Prostate gland (tissue), 2 donors: ENCODE measurements at regions of chr14 and their contacts with region 1.

Region 1: DNA sequence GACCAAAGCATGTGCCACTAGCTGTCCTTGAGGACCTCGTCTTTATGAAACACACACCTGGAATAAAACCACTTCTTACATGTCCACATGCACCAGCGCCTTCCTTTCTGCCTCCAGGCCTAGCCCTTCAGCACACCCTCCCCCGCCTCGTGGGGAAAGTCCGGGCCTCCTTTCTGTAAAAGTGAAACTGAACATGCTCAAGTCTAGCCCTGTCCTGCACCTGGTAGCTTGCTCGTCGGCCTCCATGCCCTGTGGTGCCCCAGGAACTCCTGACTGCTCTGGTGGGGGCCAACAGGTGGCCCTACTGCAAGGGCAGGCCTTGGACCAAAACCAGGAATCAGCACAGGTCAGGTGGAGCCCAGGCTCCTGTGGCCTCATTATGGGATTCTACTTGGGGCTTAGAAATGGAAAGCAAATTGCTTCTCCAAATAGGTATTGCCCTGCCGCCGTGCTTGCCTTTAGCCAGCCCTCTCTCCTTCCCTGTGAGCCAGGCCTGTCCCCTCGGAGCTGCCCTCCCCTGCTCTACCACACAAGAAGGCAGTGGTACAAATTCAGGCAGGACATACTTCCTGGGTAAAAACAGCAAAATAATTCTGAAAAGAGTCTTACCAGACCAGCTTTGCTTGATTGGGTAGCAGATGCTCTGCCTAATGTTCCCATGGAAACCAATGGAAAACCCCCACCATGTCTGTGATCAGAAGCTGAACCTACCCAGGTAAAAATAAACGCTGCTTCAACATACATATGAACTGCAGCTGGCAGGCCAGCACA is 43.5 kb downstream of the ERH start:
- DNase-seq: peak; percentile 16
- H3K4me3 ChIP-seq: no peak overlapping the region
- H3K27ac ChIP-seq: peak overlapping the region; percentile 61 to 64
- H3K4me1 ChIP-seq: peaks cover 5% of the 10 kb centered on the region
- H3K27me3 ChIP-seq: no peaks in the 10 kb centered on the region
- CTCF ChIP-seq: no peak
- POLR2A ChIP-seq: no peak

Region 2: DNA sequence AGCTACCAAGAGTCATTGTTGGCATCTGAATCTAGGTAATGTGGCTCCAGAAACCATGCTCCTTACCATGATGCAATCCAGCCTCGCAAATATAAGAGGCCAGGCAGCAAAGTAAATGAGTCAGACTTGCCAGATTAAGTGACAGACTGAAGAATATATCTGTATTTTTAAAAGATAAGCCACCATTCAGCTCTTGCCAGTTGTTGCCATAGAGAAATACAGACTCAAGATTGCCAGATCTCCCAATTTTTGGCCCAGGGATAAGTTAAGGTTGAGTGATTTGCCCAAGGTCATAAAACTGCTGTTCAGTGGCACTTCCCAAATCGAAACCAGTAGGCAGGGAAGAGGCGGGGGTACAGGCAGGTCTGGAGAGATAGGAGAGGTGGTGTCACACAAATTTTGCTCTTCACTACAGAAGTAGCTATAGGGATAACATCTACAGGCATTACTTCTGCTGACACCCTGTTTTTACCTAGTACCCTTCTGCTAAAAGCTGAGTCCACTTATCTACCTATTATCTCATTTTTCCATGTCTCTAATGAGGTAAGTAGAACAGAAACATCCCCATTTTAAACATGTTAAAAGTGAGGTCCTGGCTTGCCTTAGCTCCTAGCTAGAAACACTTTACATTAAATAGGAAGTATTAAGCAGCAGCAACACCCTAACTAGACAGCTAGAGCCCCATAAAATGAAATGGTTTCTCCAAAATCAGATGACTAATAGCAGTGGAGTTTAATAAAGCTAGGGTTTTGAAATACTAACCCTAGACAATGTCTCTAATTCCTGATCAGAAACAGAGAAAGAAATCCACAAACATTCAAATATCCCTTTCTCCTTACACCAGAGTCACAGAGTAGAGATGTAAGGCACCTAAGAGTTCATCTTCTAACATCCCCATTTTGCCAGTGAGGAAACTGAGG is 221.1 kb before region 1 on chr14:
- intact Hi-C with region 1: loop called (anchors 10 kb)
- DNase-seq: no peak
- H3K4me3 ChIP-seq: no peak overlapping the region
- H3K27ac ChIP-seq: no peak overlapping the region
- H3K4me1 ChIP-seq: peaks cover 5% of the 10 kb centered on the region
- H3K27me3 ChIP-seq: no peaks in the 10 kb centered on the region
- CTCF ChIP-seq: no peak
- POLR2A ChIP-seq: no peak

Region 3: DNA sequence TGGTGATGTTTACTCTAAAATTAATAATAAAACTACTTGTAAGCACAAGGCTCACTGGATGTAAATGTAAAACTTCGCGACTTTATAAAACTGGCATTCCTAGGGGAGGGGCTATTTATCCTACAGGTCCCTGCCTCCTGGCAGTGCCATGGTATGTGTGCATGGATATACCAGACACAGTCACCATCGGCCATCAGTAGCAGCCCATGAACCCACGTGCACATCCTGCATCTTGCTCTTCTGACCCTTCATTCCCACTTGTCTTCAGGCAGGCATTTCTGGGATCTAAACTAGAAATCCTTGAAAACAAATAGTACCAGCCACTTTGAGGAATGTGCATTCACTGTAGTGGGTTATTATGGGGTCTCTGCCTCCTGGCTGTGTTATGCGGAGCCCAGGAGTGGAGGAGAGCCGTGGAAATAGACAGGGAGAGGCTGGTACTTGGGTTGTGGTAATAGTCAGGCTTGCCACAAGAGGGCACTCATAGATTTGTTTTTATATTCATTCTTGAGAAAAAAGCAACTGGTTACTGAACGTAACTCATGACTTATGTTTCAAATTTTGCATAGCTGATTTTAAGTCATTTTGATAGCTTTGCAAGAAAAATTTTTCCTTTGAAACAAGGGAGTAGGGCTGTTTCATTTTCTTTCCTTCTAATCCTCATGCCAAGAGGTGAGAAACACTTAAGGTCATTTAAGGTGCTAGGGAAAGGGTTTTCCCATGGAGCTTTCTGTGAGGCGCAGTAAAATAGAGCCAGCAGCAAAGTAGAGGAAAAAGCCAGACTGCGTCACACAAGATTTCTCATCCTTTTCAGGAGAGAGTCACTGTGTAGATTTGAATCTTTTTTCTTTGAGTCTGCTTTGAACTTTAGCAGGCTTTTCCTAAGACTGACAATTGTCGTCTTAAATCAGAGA is 112.0 kb before region 1 on chr14:
- intact Hi-C with region 1: no loop called
- DNase-seq: peak; percentile 62
- H3K4me3 ChIP-seq: no peak overlapping the region
- H3K27ac ChIP-seq: no peak overlapping the region
- H3K4me1 ChIP-seq: no peaks in the 10 kb centered on the region
- H3K27me3 ChIP-seq: no peaks in the 10 kb centered on the region
- CTCF ChIP-seq: peak; percentile 63 to 82 (median 76)
- POLR2A ChIP-seq: no peak

Region 4: DNA sequence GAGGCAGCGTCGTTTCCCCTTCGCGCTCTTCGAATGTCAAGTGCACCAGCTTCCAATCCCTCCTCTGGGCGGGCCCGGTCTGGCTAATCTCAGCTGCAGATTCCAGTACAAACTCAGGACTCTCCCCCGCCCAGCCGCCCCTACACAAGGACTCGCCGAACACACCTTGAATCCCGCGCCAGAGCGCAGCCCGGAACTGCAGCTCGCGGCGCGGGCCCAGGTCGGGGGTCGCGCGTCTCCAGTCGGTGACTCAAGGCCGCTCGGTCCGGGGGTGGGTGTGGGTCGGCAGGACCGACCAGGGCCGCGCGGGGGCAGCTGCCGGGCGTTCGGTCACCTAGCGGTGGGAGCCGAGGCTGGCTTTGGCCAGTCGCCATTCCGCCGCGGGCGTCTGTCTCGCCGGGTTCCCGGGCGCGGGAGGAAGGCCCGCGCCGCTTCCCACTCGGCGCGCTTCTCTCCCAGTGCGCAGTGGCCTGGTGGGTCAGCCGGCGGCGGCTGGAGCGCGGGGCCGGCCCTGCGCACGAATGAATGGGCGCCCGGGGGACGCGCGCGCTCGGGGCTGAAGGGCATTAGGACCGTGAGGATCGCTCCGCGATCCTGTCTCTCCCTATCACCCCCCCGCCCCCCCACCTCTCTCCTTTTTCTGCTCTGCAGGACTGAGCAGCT is 94.9 kb before region 1 on chr14 and contains the start of gene GALNT16:
- intact Hi-C with region 1: loop called (anchors 5 kb)
- DNase-seq: no peak
- H3K4me3 ChIP-seq: peak within 1 kb of the TSS; percentile 39 to 54
- H3K27ac ChIP-seq: no peak within 1 kb of the TSS
- H3K4me1 ChIP-seq: no peaks in the 10 kb centered on the region
- H3K27me3 ChIP-seq: no peaks in the 10 kb centered on the region
- CTCF ChIP-seq: peak in 1 of 4 experiments; percentile 20
- POLR2A ChIP-seq: no peak
- total RNA-seq, gene GALNT16: 2.0 to 6.9 TPM